Naive thymus-derived CD4-positive, alpha-beta T cell (primary cell): ENCODE measurements at regions of chr1 and their contacts with region 1.

Region 1: GRCh38 chr1:58941471-58942289 is 157.8 kb upstream of the JUN start:
- DNase-seq: peak in 6 of 9 donors; percentile 33 to 65 (median 57)
- ATAC-seq: peak; percentile 83
- H3K4me3 ChIP-seq: peak overlapping the region; percentile 40
- H3K4me3 Mint-ChIP-seq: peak overlapping the region; percentile 60 to 88 (median 80)
- H3K27ac ChIP-seq: peak overlapping the region; percentile 39
- H3K27ac Mint-ChIP-seq: peak overlapping the region; percentile 37 to 89 (median 77)
- H3K4me1 ChIP-seq: peaks cover 48 to 61% of the 10 kb centered on the region in 2 donors
- H3K4me1 Mint-ChIP-seq: peaks cover 60 to 87% (median 74%) of the 10 kb centered on the region in 7 donors
- H3K27me3 ChIP-seq: no peaks in the 10 kb centered on the region
- H3K27me3 Mint-ChIP-seq: no peaks in the 10 kb centered on the region

Region 2: GRCh38 chr1:58816072-58816746 is 125.5 kb before region 1 on chr1:
- CTCF ChIA-PET with region 1: no interaction called
- POLR2A ChIA-PET with region 1: no interaction called
- intact Hi-C with region 1: loop called (anchors 2 to 10 kb)
- DNase-seq: peak; percentile 66 to 84 (median 71)
- ATAC-seq: peak; percentile 88
- H3K4me3 ChIP-seq: peak overlapping the region; percentile 89
- H3K4me3 Mint-ChIP-seq: peak overlapping the region; percentile 88 to 94 (median 92)
- H3K27ac ChIP-seq: peak overlapping the region; percentile 77
- H3K27ac Mint-ChIP-seq: peak overlapping the region; percentile 77 to 95 (median 90)
- H3K4me1 ChIP-seq: peaks cover 27 to 34% of the 10 kb centered on the region in 2 donors
- H3K4me1 Mint-ChIP-seq: peaks cover 19 to 49% (median 41%) of the 10 kb centered on the region in 7 donors
- H3K27me3 ChIP-seq: no peaks in the 10 kb centered on the region
- H3K27me3 Mint-ChIP-seq: peaks cover 0 to 5% (median 0%) of the 10 kb centered on the region in 5 donors

Region 3: GRCh38 chr1:58903514-58904298 is 38.0 kb before region 1 on chr1:
- CTCF ChIA-PET with region 1: no interaction called
- POLR2A ChIA-PET with region 1: no interaction called
- intact Hi-C with region 1: loop called (anchors 2 kb)
- DNase-seq: peak; percentile 30 to 88 (median 49)
- ATAC-seq: peak; percentile 91
- H3K4me3 ChIP-seq: peak overlapping the region; percentile 60
- H3K4me3 Mint-ChIP-seq: peak overlapping the region; percentile 74 to 86 (median 80)
- H3K27ac ChIP-seq: peak overlapping the region; percentile 63
- H3K27ac Mint-ChIP-seq: peak overlapping the region in 8 of 9 donors; percentile 33 to 91 (median 74)
- H3K4me1 ChIP-seq: peaks cover 4% of the 10 kb centered on the region in 2 donors
- H3K4me1 Mint-ChIP-seq: peaks cover 5 to 38% (median 16%) of the 10 kb centered on the region in 7 donors
- H3K27me3 ChIP-seq: no peaks in the 10 kb centered on the region
- H3K27me3 Mint-ChIP-seq: no peaks in the 10 kb centered on the region

Region 4: DNA sequence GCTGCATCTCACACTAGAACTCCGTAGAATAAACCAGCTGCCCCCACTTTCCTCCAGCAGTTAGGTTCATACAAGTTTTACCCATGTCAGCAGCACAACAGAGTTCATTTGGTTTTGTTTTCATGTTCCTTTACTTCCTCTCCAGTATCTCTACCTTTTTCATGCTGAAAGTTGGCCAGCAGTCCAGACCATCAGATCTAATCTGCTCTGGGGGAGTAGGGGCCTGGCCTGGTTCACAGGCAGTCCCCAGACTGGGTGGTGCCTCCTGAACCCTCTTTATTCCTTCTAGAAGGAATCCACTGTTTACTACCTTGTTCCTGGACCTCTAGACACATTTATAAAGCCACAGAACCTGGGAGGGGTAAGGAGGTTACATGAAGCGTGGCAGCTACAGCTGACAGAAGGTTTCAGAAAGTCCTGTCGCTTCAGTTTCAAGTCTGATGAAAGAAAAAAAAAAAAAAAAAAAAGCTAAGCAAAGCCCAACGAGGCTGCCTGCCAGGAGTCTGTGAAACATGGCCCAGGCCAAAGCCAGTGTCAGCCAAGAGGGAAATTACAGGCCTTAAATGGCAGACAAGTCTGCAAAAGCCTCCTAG is 26.8 kb after region 1 on chr1:
- CTCF ChIA-PET with region 1: interaction called, 3 read pairs
- POLR2A ChIA-PET with region 1: interaction called, 7 read pairs
- intact Hi-C with region 1: loop called (anchors 1 to 2 kb)
- DNase-seq: peak in 6 of 9 donors; percentile 34 to 66 (median 56)
- ATAC-seq: peak; percentile 66
- H3K4me3 ChIP-seq: no peak overlapping the region
- H3K4me3 Mint-ChIP-seq: peak overlapping the region; percentile 55 to 84 (median 70)
- H3K27ac ChIP-seq: peak overlapping the region; percentile 72
- H3K27ac Mint-ChIP-seq: peak overlapping the region; percentile 91 to 100 (median 96)
- H3K4me1 ChIP-seq: peaks cover 16 to 28% of the 10 kb centered on the region in 2 donors
- H3K4me1 Mint-ChIP-seq: peaks cover 13 to 73% (median 41%) of the 10 kb centered on the region in 7 donors
- H3K27me3 ChIP-seq: no peaks in the 10 kb centered on the region
- H3K27me3 Mint-ChIP-seq: no peaks in the 10 kb centered on the region

Region 5: DNA sequence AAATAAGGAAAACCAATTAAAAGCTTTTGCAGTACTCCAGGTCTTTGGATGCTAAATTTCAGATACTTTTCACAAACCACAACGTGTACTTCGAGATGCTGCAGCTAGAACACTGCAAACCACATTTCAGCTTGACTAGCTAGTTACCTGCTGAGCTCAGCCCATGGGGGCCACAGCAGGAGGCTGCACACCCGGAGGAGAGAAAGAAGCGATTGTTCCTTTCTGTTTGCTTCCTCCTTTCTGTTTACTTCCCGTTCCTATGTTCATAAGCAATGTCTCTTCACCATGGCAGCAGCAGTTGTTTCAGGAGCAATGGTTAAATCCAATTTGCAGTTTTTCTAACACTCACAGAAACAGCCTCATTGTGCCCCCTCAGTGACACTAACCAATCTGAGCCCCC is 129.6 kb after region 1 on chr1:
- CTCF ChIA-PET with region 1: interaction called, 3 read pairs
- POLR2A ChIA-PET with region 1: no interaction called
- intact Hi-C with region 1: loop called in 1 of 2 experiments (anchors 5 kb)
- DNase-seq: peak in 5 of 9 donors; percentile 12 to 30 (median 22)
- ATAC-seq: peak; percentile 38
- H3K4me3 ChIP-seq: peak overlapping the region; percentile 21
- H3K4me3 Mint-ChIP-seq: peak overlapping the region; percentile 51 to 84 (median 70)
- H3K27ac ChIP-seq: no peak overlapping the region
- H3K27ac Mint-ChIP-seq: peak overlapping the region; percentile 41 to 91 (median 79)
- H3K4me1 ChIP-seq: peaks cover 21 to 26% of the 10 kb centered on the region in 2 donors
- H3K4me1 Mint-ChIP-seq: peaks cover 21 to 32% (median 27%) of the 10 kb centered on the region in 7 donors
- H3K27me3 ChIP-seq: no peaks in the 10 kb centered on the region
- H3K27me3 Mint-ChIP-seq: no peaks in the 10 kb centered on the region

Region 6: GRCh38 chr1:59412718-59413326 is 471.1 kb after region 1 on chr1:
- CTCF ChIA-PET with region 1: no interaction called
- POLR2A ChIA-PET with region 1: no interaction called
- intact Hi-C with region 1: no loop called
- DNase-seq: no peak
- ATAC-seq: peak; percentile 38
- H3K4me3 ChIP-seq: no peak overlapping the region
- H3K4me3 Mint-ChIP-seq: no peak overlapping the region
- H3K27ac ChIP-seq: no peak overlapping the region
- H3K27ac Mint-ChIP-seq: no peak overlapping the region
- H3K4me1 ChIP-seq: no peaks in the 10 kb centered on the region
- H3K4me1 Mint-ChIP-seq: no peaks in the 10 kb centered on the region
- H3K27me3 ChIP-seq: no peaks in the 10 kb centered on the region
- H3K27me3 Mint-ChIP-seq: no peaks in the 10 kb centered on the region